CD8-positive, alpha-beta T cell (primary cell): ENCODE measurements at regions of chr2 and their contacts with region 1.

Region 1: GRCh38 chr2:199488772-199489400 is 31.1 kb upstream of the SATB2 start:
- DNase-seq: peak in 7 of 9 experiments; percentile 12 to 55 (median 31)
- ATAC-seq: no peak
- H3K4me3 ChIP-seq: no peak overlapping the region
- H3K4me3 Mint-ChIP-seq: no peak overlapping the region
- H3K27ac ChIP-seq: no peak overlapping the region
- H3K27ac Mint-ChIP-seq: no peak overlapping the region
- H3K4me1 ChIP-seq: no peaks in the 10 kb centered on the region
- H3K4me1 Mint-ChIP-seq: no peaks in the 10 kb centered on the region
- H3K27me3 ChIP-seq: peaks cover 0 to 4% of the 10 kb centered on the region in 2 experiments
- H3K27me3 Mint-ChIP-seq: peaks cover 18% of the 10 kb centered on the region
- CTCF ChIP-seq: peak; percentile 65

Region 2: GRCh38 chr2:198913394-198914152 is 575.3 kb before region 1 on chr2:
- CTCF ChIA-PET with region 1: no interaction called
- POLR2A ChIA-PET with region 1: no interaction called
- intact Hi-C with region 1: no loop called
- DNase-seq: no peak
- ATAC-seq: no peak
- H3K4me3 ChIP-seq: no peak overlapping the region
- H3K4me3 Mint-ChIP-seq: no peak overlapping the region
- H3K27ac ChIP-seq: no peak overlapping the region
- H3K27ac Mint-ChIP-seq: no peak overlapping the region
- H3K4me1 ChIP-seq: no peaks in the 10 kb centered on the region
- H3K4me1 Mint-ChIP-seq: no peaks in the 10 kb centered on the region
- H3K27me3 ChIP-seq: no peaks in the 10 kb centered on the region
- H3K27me3 Mint-ChIP-seq: no peaks in the 10 kb centered on the region
- CTCF ChIP-seq: no peak

Region 3: GRCh38 chr2:199261239-199261638 is 227.6 kb before region 1 on chr2:
- CTCF ChIA-PET with region 1: no interaction called
- POLR2A ChIA-PET with region 1: no interaction called
- intact Hi-C with region 1: no loop called
- DNase-seq: no peak
- ATAC-seq: no peak
- H3K4me3 ChIP-seq: no peak overlapping the region
- H3K4me3 Mint-ChIP-seq: no peak overlapping the region
- H3K27ac ChIP-seq: no peak overlapping the region
- H3K27ac Mint-ChIP-seq: no peak overlapping the region
- H3K4me1 ChIP-seq: no peaks in the 10 kb centered on the region
- H3K4me1 Mint-ChIP-seq: no peaks in the 10 kb centered on the region
- H3K27me3 ChIP-seq: no peaks in the 10 kb centered on the region
- H3K27me3 Mint-ChIP-seq: peaks cover 2% of the 10 kb centered on the region
- CTCF ChIP-seq: no peak

Region 4: GRCh38 chr2:199477277-199477834 is 11.5 kb before region 1 on chr2:
- CTCF ChIA-PET with region 1: interaction called, 12 read pairs
- POLR2A ChIA-PET with region 1: no interaction called
- intact Hi-C with region 1: no loop called
- DNase-seq: no peak
- ATAC-seq: no peak
- H3K4me3 ChIP-seq: no peak overlapping the region
- H3K4me3 Mint-ChIP-seq: no peak overlapping the region
- H3K27ac ChIP-seq: no peak overlapping the region
- H3K27ac Mint-ChIP-seq: no peak overlapping the region
- H3K4me1 ChIP-seq: no peaks in the 10 kb centered on the region
- H3K4me1 Mint-ChIP-seq: no peaks in the 10 kb centered on the region
- H3K27me3 ChIP-seq: peaks cover 0 to 11% of the 10 kb centered on the region in 2 experiments
- H3K27me3 Mint-ChIP-seq: peaks cover 34% of the 10 kb centered on the region
- CTCF ChIP-seq: no peak

Region 5: GRCh38 chr2:199606193-199606780 is 117.4 kb after region 1 on chr2:
- CTCF ChIA-PET with region 1: no interaction called
- POLR2A ChIA-PET with region 1: no interaction called
- intact Hi-C with region 1: no loop called
- DNase-seq: no peak
- ATAC-seq: no peak
- H3K4me3 ChIP-seq: no peak overlapping the region
- H3K4me3 Mint-ChIP-seq: no peak overlapping the region
- H3K27ac ChIP-seq: no peak overlapping the region
- H3K27ac Mint-ChIP-seq: no peak overlapping the region
- H3K4me1 ChIP-seq: no peaks in the 10 kb centered on the region
- H3K4me1 Mint-ChIP-seq: peaks cover 4% of the 10 kb centered on the region
- H3K27me3 ChIP-seq: peaks cover 0 to 3% of the 10 kb centered on the region in 2 experiments
- H3K27me3 Mint-ChIP-seq: peaks cover 2% of the 10 kb centered on the region
- CTCF ChIP-seq: no peak

Region 6: GRCh38 chr2:199663157-199663556 is 174.3 kb after region 1 on chr2:
- CTCF ChIA-PET with region 1: no interaction called
- POLR2A ChIA-PET with region 1: no interaction called
- intact Hi-C with region 1: no loop called
- DNase-seq: no peak
- ATAC-seq: no peak
- H3K4me3 ChIP-seq: no peak overlapping the region
- H3K4me3 Mint-ChIP-seq: no peak overlapping the region
- H3K27ac ChIP-seq: no peak overlapping the region
- H3K27ac Mint-ChIP-seq: no peak overlapping the region
- H3K4me1 ChIP-seq: no peaks in the 10 kb centered on the region
- H3K4me1 Mint-ChIP-seq: no peaks in the 10 kb centered on the region
- H3K27me3 ChIP-seq: no peaks in the 10 kb centered on the region
- H3K27me3 Mint-ChIP-seq: peaks cover 26% of the 10 kb centered on the region
- CTCF ChIP-seq: no peak